Pancreas (tissue), 10 donors: ENCODE measurements at regions of chr22 and their contacts with region 1.

Region 1: DNA sequence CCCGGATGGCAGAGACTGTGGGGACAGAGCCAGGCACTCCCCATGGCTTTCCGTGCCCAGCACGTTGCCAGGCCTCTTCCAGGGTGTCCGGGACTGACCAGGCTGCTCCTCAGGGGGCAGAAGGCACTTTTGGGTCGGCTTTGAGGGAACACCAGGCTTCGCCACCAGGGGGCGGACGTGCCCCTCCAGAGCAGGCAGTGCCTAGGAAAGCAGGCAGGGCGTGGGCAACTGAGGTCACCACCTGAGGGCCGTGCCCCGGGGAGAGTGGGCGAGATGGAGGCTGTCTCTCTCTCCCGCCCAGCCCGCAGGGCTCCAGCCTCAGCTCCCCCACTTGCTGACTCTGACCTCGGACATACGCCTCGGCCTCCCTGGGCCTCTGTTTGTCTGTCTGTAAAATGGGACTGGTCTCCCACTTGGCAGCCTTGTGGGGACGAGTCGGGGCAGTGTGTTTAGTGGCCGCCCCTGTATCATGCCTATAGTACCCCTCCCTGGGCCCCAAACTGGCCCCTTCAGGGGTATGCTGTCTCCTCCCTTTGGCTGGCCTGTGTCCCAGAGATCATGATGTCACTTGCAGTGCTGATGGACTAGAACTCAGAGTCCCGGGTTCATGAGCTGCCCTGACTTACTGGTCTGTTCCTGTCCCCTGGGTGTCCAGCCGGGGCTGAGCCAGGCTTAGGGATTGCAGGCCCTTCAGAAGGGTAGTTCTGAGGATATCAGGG is 4.4 kb upstream of the PRR5 start:
- DNase-seq: peak; percentile 64 to 96 (median 86)
- ATAC-seq: peak; percentile 51 to 75 (median 67)
- H3K4me3 ChIP-seq: no peak overlapping the region
- H3K27ac ChIP-seq: no peak overlapping the region
- H3K4me1 ChIP-seq: no peaks in the 10 kb centered on the region
- H3K27me3 ChIP-seq: no peaks in the 10 kb centered on the region
- CTCF ChIP-seq: peak; percentile 75 to 89 (median 88)

Region 2: GRCh38 chr22:44639001-44639760 is 58.4 kb before region 1 on chr22:
- intact Hi-C with region 1: no loop called
- DNase-seq: no peak
- ATAC-seq: peak in 3 of 4 donors; percentile 13 to 50 (median 38)
- H3K4me3 ChIP-seq: no peak overlapping the region
- H3K27ac ChIP-seq: no peak overlapping the region
- H3K4me1 ChIP-seq: no peaks in the 10 kb centered on the region
- H3K27me3 ChIP-seq: peaks cover 0 to 1% (median 0%) of the 10 kb centered on the region in 4 donors
- CTCF ChIP-seq: no peak

Region 3: DNA sequence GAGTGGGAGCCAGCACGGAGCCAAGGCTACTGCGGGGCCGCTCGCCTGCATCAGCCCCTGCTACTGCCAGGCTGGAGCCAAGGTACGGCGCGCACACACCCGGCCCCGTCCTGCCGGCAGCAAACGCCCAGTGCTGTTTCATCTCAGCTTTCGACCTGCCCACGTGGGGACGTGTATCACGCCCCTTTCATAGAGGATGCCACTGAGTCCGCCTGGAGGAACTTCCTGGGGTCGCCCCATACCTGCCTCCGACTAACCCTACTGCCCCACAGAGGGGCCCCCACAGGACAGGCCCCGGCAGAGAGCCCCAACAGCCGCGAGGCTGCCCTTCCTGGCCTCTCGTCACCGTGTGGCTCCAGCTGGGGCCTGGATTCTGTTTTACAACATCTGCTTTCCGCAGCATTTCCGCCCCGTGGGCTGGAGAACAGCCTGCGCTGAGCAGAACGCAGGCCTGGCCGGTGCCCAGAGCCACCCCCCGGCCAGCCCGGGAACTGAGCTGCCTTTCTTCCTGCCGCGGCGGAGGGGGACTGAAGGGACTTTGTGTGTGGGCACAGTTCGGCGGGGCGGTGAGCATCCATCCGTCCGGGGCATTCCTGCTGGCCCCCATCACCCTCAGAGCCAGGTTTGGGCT is 31.9 kb after region 1 on chr22:
- intact Hi-C with region 1: loop called in 2 of 3 experiments (anchors 2 to 5 kb)
- DNase-seq: peak in 1 of 6 donors; percentile 67
- ATAC-seq: peak in 3 of 4 donors; percentile 31 to 47 (median 41)
- H3K4me3 ChIP-seq: no peak overlapping the region
- H3K27ac ChIP-seq: no peak overlapping the region
- H3K4me1 ChIP-seq: peaks cover 0 to 5% (median 0%) of the 10 kb centered on the region in 3 donors
- H3K27me3 ChIP-seq: no peaks in the 10 kb centered on the region
- CTCF ChIP-seq: no peak

Region 4: DNA sequence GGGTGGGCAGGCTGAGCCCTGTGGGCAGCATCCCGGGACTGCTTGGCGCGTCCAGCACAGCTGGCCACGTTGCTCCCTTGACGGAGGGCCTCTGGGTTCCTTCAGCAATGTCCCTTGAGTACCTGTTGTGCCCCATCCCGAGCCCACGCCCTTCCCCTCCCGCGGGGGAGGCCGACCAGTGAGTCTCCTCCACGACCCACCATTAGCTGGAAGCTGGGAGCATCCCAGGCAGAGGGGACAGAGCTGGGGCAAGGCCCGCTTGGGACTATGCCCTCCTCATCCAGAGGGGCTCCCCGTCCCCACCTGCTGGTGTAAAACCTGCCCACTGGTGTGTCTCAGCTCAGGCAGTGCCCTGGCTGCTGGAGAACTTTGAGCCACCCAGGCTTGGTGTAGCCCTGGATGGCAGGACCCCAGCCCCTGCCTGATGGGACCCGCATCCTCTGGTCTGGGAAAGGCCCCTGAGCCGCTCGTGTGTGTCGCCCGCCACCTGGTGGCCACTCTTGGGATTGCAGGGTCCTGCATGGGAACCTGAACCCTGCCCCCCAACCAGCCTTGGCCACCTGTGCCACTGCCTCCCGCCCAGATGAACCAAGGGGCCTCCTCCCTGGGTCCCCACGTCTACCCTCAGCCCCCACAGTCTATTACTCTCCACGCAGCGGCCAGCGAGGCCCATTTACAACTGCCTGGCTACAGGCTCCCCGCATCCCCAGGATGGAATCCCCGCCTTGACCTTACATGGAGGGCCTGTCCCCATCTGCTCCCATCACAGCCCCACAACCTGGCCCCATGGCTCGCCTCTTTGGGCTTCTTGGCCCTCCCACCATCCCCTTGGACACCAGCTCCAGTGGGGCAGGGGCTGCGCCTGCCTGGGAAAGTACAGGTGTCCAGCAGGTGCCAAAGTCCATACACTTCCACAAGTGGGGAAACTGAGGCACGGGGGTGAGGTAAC is 38.2 kb after region 1 on chr22:
- intact Hi-C with region 1: loop called in 2 of 3 experiments (anchors 2 to 5 kb)
- DNase-seq: peak; percentile 50 to 98 (median 82)
- ATAC-seq: peak; percentile 60 to 85 (median 78)
- H3K4me3 ChIP-seq: no peak overlapping the region
- H3K27ac ChIP-seq: no peak overlapping the region
- H3K4me1 ChIP-seq: peaks cover 0 to 5% (median 0%) of the 10 kb centered on the region in 3 donors
- H3K27me3 ChIP-seq: no peaks in the 10 kb centered on the region
- CTCF ChIP-seq: peak; percentile 98 to 100 (median 99)

Region 5: DNA sequence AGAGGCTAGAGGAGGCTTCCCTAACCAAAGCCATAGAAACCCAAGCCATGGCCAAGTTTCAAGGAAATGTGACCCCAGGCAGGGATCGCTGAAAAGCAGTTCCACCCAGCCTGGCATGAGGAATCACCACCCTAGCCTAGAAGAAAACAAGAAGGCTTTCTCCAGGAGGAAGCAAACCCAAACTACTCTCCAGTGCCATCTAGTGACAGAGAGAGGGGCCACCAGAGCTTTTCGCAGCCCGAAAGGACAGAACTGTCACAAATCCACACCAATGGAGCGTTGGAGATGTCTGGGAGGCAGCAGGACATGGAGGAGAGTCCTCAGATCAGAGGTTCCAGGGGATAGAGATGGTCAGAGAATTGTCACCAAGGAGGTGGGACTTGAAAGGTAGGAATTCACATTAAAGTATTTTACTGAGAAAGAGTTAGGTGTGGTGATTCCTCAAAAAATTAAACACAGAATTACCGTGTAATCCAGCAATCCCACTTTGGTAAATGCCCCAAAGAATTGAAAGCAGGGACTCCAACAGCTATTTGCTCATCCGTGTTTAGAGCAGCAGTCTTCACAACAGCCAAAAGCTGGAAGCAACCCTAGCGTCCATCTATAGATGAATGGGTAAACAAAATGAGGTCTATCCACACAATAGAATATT is 398.8 kb after region 1 on chr22:
- intact Hi-C with region 1: loop called in 1 of 3 experiments (anchors 10 kb)
- DNase-seq: peak in 4 of 6 donors; percentile 16 to 67 (median 50)
- ATAC-seq: peak in 3 of 4 donors; percentile 83 to 93 (median 87)
- H3K4me3 ChIP-seq: no peak overlapping the region
- H3K27ac ChIP-seq: no peak overlapping the region
- H3K4me1 ChIP-seq: no peaks in the 10 kb centered on the region
- H3K27me3 ChIP-seq: peaks cover 0 to 11% (median 0%) of the 10 kb centered on the region in 4 donors
- CTCF ChIP-seq: peak; percentile 41 to 76 (median 68)